A549 (cell line): ENCODE measurements at regions of chr20 and their contacts with region 1.

Region 1: DNA sequence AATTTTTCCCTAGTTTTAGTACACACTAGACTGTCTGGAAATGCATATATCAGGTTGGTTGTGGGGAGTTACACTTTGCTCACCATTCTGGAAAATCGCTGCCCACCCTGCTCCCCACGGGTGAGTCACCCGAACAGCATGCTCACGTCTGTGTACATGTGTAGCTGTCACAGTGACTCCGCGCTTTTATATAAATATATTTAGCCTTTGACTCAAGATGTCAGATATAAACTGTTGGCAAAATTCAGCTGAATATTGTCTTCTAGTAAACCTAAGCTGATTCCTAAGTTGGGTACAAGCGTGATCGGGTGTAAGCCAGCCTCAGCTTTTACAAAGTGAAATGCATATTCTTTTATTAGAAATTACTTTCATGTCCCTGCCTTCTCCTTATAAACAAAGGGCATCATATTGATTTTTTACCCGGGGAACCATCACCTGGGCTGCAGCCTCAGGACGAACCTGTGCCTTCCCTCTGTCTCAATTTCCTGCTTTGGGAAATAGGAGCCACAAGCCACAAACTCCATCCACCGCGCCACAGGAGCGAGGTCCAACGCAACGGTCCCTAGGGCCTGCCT is 4.3 kb downstream of the SDCBP2 start:
- DNase-seq: peak; percentile 42 to 64
- ATAC-seq: peak; percentile 45 to 48
- H3K4me3 ChIP-seq: peak overlapping the region; percentile 97
- H3K27ac ChIP-seq: peak overlapping the region; percentile 97 to 99
- H3K4me1 ChIP-seq: peaks cover 37% of the 10 kb centered on the region
- CTCF ChIP-seq: no peak
- EP300 ChIP-seq: no peak
- POLR2A ChIP-seq: no peak
- RAD21 ChIP-seq: no peak

Region 2: GRCh38 chr20:1313236-1313964 is 11.3 kb before region 1 on chr20:
- CTCF ChIA-PET with region 1: interaction called, 13 read pairs
- POLR2A ChIA-PET with region 1: no interaction called
- DNase-seq: peak; percentile 71 to 75
- ATAC-seq: peak; percentile 59 to 88; a peak in 4 of 6 replicates
- H3K4me3 ChIP-seq: no peak overlapping the region
- H3K27ac ChIP-seq: 0 out of 6 replicates have a peak overlapping the region, but pooled peaks of 1 of the 2 experiments have one; percentile 29
- H3K4me1 ChIP-seq: peaks cover 3% of the 10 kb centered on the region; the same call in 1 of the 3 replicates
- CTCF ChIP-seq: peak; percentile 83
- EP300 ChIP-seq: no peak
- POLR2A ChIP-seq: no peak
- RAD21 ChIP-seq: peak; percentile 79 to 86